MCF 10A (cell line): ENCODE measurements at regions of chr9 and their contacts with region 1.

Region 1: DNA sequence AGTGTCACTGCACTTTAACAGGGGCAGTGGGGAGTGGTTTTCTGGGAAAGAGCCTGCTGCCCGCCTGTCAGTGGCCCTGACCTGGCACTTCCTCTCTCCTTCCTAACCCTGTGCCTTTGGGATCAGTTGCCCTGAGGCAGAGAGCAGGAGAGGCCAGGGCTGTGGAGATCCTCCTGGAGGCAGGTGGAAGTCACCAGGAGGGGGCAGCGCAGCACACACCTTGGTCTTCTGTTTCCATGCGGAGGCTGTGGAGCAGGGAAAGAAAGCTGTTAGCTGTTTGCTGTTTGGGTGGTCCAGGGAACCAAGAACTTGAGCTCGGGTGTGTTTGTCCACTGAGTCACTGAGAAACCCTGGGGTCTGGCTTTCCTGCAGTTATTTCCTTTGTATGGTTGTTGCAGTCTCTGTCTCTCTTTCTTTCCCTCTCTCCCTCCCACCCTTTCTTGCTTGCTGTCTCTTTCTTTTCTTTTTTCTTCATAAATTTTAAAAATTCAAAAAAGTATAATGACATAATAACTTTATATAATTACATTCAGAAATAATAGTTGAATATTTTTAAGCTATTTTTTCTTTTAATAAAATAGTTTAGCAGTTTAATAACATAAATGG is 28.1 kb downstream of the NTRK2 start:
- DNase-seq: peak; percentile 71
- H3K4me3 Mint-ChIP-seq: no peak overlapping the region
- H3K27ac Mint-ChIP-seq: no peak overlapping the region
- H3K4me1 Mint-ChIP-seq: peaks cover 5% of the 10 kb centered on the region
- H3K27me3 Mint-ChIP-seq: no peaks in the 10 kb centered on the region
- CTCF ChIP-seq: peak; percentile 67

Region 2: GRCh38 chr9:84711902-84712301 is 14.3 kb after region 1 on chr9:
- CTCF ChIA-PET with region 1: interaction called, 26 read pairs
- POLR2A ChIA-PET with region 1: interaction called, 3 read pairs
- intact Hi-C with region 1: no loop called
- DNase-seq: peak; percentile 96
- H3K4me3 Mint-ChIP-seq: peak overlapping the region; percentile 64
- H3K27ac Mint-ChIP-seq: peak overlapping the region; percentile 96
- H3K4me1 Mint-ChIP-seq: peaks cover 32% of the 10 kb centered on the region
- H3K27me3 Mint-ChIP-seq: no peaks in the 10 kb centered on the region
- CTCF ChIP-seq: no peak

Region 3: DNA sequence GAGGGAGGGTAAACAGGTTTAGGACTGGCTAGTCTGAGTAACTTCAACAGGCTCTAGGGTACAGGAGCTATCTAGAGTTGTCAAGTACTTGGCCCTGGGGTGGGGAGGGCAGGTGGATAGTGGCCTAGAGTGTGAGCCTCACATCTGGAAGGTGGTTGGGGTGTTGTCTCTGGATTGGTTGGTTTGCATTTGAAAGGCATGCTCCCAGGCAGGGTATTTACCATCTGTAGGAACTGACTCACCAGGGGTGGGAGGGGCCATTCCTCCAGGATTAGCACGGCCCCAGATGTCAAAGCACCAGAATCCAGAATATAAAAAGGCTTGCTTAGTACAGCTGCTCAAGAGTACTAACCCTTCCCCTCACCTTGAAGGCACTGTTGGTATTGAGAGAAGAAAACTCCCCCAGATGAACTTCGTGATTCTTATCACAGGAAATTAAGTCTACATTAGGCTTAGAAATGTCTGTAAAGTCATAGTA is 165.2 kb after region 1 on chr9:
- CTCF ChIA-PET with region 1: no interaction called
- POLR2A ChIA-PET with region 1: no interaction called
- intact Hi-C with region 1: no loop called
- DNase-seq: peak; percentile 69
- H3K4me3 Mint-ChIP-seq: no peak overlapping the region
- H3K27ac Mint-ChIP-seq: peak overlapping the region; percentile 32
- H3K4me1 Mint-ChIP-seq: peaks cover 6% of the 10 kb centered on the region
- H3K27me3 Mint-ChIP-seq: no peaks in the 10 kb centered on the region
- CTCF ChIP-seq: no peak

Region 4: GRCh38 chr9:84947363-84947972 is 249.9 kb after region 1 on chr9:
- CTCF ChIA-PET with region 1: interaction called, 13 read pairs
- POLR2A ChIA-PET with region 1: no interaction called
- intact Hi-C with region 1: no loop called
- DNase-seq: peak; percentile 91
- H3K4me3 Mint-ChIP-seq: no peak overlapping the region
- H3K27ac Mint-ChIP-seq: peak overlapping the region; percentile 82
- H3K4me1 Mint-ChIP-seq: peaks cover 14% of the 10 kb centered on the region
- H3K27me3 Mint-ChIP-seq: no peaks in the 10 kb centered on the region
- CTCF ChIP-seq: no peak

Region 5: GRCh38 chr9:84959339-84959738 is 261.7 kb after region 1 on chr9:
- CTCF ChIA-PET with region 1: interaction called, 36 read pairs
- POLR2A ChIA-PET with region 1: no interaction called
- intact Hi-C with region 1: loop called (anchors 1 kb)
- DNase-seq: no peak
- H3K4me3 Mint-ChIP-seq: no peak overlapping the region
- H3K27ac Mint-ChIP-seq: no peak overlapping the region
- H3K4me1 Mint-ChIP-seq: peaks cover under 1% of the 10 kb centered on the region
- H3K27me3 Mint-ChIP-seq: no peaks in the 10 kb centered on the region
- CTCF ChIP-seq: no peak

Region 6: DNA sequence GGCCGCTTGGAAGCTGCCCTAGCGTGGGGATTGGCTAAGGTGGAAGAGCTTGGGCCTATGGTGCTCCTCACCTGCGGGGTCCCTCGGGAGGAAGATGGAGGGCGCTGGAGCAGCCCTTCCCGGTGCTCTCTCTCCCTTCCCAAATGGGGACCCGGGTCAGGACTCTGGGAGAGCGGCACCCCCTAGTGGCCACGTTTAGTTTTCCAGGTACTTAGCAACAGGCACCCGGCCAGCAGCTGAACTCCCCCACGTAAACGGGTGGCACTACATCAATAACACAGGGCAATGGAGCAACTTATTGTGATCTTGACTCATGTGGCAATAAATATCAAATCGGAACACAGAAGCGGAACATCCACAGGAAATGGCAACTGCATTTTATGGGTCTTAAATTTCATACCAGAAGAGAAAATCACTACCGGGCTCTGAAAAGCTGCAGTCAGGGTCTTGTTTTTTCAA is 727.6 kb after region 1 on chr9:
- CTCF ChIA-PET with region 1: no interaction called
- POLR2A ChIA-PET with region 1: interaction called, 3 read pairs
- intact Hi-C with region 1: loop called (anchors 1 kb)
- DNase-seq: peak; percentile 72
- H3K4me3 Mint-ChIP-seq: no peak overlapping the region
- H3K27ac Mint-ChIP-seq: no peak overlapping the region
- H3K4me1 Mint-ChIP-seq: peaks cover 5% of the 10 kb centered on the region
- H3K27me3 Mint-ChIP-seq: peaks cover 17% of the 10 kb centered on the region
- CTCF ChIP-seq: peak; percentile 78